ENCODE measurements at regions of chr17 and their contacts with region 1.

Region 1: DNA sequence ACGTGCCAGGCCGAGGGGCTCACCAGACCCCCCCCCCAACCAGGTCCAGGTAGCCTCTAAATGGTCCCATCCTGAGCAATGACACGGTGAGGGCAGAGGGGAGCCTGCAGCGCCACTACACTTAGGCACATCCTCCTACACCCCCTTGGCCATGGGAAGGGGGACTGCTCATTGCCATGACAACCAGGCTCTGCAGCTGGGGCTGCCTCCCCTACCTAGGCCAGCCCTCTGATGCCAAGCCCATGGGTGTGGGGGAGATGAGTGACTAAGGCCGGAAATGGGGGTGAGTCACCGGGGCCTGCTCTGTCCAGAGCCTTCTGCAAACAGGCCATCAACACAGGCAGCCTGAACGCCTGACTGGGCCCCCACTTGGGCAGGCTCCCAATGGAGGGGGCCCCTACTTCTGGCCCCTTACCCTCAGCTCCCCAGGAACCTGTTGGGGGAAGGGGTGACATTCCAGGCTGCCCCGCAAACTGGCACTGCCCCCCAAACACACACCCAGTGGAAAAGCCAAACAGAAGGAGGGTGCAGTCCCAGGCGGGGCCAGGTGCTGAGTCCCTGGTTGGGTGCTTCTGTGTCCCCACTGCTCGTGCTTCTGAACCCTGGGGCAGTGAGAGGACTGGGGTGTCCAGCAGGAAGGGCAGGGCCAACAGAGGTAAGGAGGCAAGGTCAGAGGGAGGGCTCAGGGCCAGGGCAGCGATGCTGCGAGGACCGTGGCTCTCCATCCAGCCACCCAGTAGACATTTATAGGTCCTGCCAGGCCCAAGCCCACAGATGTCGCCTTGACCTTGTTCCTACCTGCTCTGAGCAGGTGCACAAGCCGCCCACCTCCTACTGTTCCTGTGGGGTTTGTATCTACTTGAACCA is 8.2 kb downstream of the PLCD3 start:
- DNase-seq: no peak
- H3K4me3 ChIP-seq: no peak overlapping the region
- H3K4me1 ChIP-seq: no peaks in the 10 kb centered on the region
- H3K27me3 ChIP-seq: no peaks in the 10 kb centered on the region

Region 2: DNA sequence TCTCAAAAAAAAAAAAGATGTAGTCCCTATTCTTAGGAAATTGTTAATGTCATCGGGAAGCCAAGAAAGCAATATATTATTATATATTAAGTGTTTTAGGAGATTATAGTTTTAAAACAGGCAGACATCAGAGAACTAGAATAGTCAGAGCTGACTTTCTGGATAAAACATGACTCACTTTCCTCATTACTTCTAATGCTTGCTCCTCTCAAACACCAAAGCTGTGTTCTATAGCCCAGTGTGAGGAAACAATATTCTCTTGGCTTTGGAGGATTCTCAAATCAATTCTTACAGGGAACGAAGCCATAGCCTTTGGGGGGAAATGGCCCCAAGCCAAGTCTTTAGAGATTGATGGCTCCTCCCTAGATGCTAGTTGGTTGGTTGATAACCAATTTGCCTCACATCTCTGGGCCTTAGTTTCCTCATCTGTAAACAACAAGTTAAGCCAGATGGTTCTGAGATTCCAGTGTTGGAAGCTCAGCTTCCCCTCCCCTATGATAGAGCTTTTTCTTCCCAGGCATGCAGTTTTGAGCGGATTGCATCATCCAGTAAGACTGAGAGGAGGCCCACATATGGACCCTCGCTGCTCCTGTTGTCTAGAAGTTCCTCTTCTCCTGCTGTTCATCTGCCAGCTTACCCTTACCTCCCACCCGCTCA is 50.6 kb before region 1 on chr17:
- in situ Hi-C with region 1: loop called (anchors 10 kb)
- DNase-seq: no peak
- H3K4me3 ChIP-seq: no peak overlapping the region
- H3K4me1 ChIP-seq: peaks cover 5% of the 10 kb centered on the region; the same call in 1 of the 2 replicates
- H3K27me3 ChIP-seq: no peaks in the 10 kb centered on the region